ENCODE measurements at regions of chr16 and their contacts with region 1.

Region 1: GRCh38 chr16:508884-509736 is 18.4 kb upstream of the CAPN15 start:
- DNase-seq: no peak
- H3K4me3 ChIP-seq: no peak overlapping the region
- H3K27ac ChIP-seq: no peak overlapping the region
- H3K4me1 ChIP-seq: no peaks in the 10 kb centered on the region
- H3K27me3 ChIP-seq: no peaks in the 10 kb centered on the region
- CTCF ChIP-seq: no peak

Region 2: DNA sequence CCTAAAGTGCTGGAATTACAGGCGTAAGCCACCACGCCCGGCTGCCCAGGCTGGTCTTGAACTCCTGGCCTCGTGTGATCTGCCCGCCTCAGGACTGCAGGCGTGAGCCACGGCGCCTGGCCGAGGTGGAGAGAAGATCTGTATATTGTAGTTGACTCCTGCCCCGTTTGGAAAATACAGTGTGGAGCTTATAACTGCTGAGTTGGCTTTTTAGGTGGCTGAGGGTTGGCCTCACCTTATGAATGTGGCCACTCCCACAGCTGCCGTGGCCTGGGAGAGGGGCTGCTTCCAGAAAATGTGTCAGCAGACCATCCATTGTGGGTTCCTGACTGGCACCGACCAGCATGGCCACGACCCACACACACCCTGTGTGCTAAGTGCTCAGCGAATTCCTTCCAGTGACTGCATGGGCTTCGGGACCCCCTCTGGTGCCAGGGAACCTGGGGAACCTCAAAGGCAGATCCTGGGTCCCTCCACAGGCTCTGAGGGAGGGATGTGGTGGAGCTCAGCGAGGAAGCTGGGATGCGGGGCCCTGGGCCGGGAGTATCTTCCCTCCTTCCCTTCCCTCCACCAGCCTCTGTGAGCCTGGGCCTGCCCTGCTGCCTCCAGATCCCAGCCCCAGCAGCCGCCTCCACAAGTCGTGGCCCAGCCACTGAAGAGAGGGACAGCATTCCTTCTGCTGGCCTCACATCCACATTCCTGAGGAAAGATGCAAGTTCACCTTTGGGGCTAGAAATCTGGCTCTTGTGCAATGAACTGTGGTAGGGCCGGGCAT is 94.5 kb before region 1 on chr16:
- CTCF ChIA-PET with region 1: no interaction called
- dilution Hi-C with region 1: loop called (anchors 5 kb)
- in situ Hi-C with region 1: no loop called
- intact Hi-C with region 1: no loop called
- DNase-seq: peak; percentile 52
- H3K4me3 ChIP-seq: no peak overlapping the region
- H3K27ac ChIP-seq: no peak overlapping the region
- H3K4me1 ChIP-seq: peaks cover 7% of the 10 kb centered on the region
- H3K27me3 ChIP-seq: no peaks in the 10 kb centered on the region
- CTCF ChIP-seq: no peak

Region 3: GRCh38 chr16:456891-457483 is 52.1 kb before region 1 on chr16:
- CTCF ChIA-PET with region 1: no interaction called
- dilution Hi-C with region 1: loop called (anchors 5 kb)
- in situ Hi-C with region 1: no loop called
- intact Hi-C with region 1: no loop called
- DNase-seq: no peak
- H3K4me3 ChIP-seq: no peak overlapping the region
- H3K27ac ChIP-seq: no peak overlapping the region
- H3K4me1 ChIP-seq: no peaks in the 10 kb centered on the region
- H3K27me3 ChIP-seq: no peaks in the 10 kb centered on the region
- CTCF ChIP-seq: no peak

Measured in mammary epithelial cell (primary cell).